ENCODE measurements at regions of chr3 and their contacts with region 1.

Region 1: GRCh38 chr3:3729261-3729660 is 70.0 kb upstream of the LRRN1 start:
- DNase-seq: no peak
- H3K4me3 ChIP-seq: no peak overlapping the region
- H3K27ac ChIP-seq: no peak overlapping the region
- H3K4me1 ChIP-seq: no peaks in the 10 kb centered on the region
- H3K27me3 ChIP-seq: no peaks in the 10 kb centered on the region
- CTCF ChIP-seq: no peak

Region 2: DNA sequence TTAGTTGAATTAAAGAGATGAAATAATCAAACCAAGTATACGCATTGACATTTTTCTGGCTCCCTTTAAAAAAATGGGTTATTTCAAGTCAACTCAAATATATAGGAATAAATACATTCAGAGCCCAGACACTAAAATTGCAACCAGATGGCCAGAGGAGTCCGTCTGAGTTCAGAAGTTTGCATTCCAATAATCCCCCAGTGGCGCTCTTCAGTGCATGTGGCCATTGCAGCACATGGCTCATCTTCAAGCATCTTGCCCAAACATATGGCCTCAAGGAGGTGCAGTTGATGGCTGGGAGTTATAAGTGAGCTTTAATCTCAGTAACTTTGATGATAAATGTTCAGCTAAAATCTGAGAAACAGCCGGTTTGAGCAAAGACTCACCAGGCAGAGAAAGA is 225.8 kb before region 1 on chr3:
- CTCF ChIA-PET with region 1: no interaction called
- POLR2A ChIA-PET with region 1: no interaction called
- intact Hi-C with region 1: no loop called
- DNase-seq: no peak
- H3K4me3 ChIP-seq: no peak overlapping the region
- H3K27ac ChIP-seq: no peak overlapping the region
- H3K4me1 ChIP-seq: no peaks in the 10 kb centered on the region
- H3K27me3 ChIP-seq: no peaks in the 10 kb centered on the region
- CTCF ChIP-seq: no peak

Region 3: DNA sequence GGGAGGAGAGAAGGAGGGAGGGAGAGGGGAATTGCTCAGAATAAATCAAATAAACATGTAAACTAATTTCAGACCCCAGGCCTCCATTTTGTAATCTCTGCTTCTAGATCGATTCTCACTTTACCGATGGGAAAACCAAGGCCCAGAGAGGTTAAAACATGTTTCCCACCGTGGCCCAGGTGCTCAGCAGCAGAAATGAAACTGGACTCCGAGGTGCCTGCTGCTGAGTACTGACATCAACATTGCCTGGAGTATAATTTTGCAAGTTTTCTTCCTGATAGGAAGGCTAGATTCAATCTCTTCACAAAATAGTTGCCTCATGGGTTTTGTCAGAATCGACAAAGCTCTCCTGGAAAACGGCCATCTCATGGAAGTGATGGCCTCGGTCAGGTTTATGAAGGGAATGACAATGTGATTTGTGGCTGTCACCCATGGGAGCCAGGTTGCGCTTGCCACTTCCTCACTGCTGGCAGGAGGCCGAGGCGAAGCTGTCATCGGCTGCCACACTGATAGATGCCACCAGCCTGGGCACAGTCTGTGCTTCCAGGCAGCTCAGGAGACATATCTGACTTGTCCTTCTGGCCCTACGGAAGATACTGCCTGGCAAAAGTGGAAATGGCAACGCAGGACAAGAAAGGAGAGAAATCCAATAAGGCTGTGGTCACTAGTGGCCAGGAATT is 63.2 kb before region 1 on chr3:
- CTCF ChIA-PET with region 1: no interaction called
- POLR2A ChIA-PET with region 1: no interaction called
- intact Hi-C with region 1: no loop called
- DNase-seq: no peak
- H3K4me3 ChIP-seq: no peak overlapping the region
- H3K27ac ChIP-seq: no peak overlapping the region
- H3K4me1 ChIP-seq: no peaks in the 10 kb centered on the region
- H3K27me3 ChIP-seq: no peaks in the 10 kb centered on the region
- CTCF ChIP-seq: no peak

Region 4: GRCh38 chr3:3683261-3683660 is 46.0 kb before region 1 on chr3:
- CTCF ChIA-PET with region 1: no interaction called
- POLR2A ChIA-PET with region 1: no interaction called
- intact Hi-C with region 1: no loop called
- DNase-seq: no peak
- H3K4me3 ChIP-seq: no peak overlapping the region
- H3K27ac ChIP-seq: no peak overlapping the region
- H3K4me1 ChIP-seq: no peaks in the 10 kb centered on the region
- H3K27me3 ChIP-seq: no peaks in the 10 kb centered on the region
- CTCF ChIP-seq: no peak

Region 5: DNA sequence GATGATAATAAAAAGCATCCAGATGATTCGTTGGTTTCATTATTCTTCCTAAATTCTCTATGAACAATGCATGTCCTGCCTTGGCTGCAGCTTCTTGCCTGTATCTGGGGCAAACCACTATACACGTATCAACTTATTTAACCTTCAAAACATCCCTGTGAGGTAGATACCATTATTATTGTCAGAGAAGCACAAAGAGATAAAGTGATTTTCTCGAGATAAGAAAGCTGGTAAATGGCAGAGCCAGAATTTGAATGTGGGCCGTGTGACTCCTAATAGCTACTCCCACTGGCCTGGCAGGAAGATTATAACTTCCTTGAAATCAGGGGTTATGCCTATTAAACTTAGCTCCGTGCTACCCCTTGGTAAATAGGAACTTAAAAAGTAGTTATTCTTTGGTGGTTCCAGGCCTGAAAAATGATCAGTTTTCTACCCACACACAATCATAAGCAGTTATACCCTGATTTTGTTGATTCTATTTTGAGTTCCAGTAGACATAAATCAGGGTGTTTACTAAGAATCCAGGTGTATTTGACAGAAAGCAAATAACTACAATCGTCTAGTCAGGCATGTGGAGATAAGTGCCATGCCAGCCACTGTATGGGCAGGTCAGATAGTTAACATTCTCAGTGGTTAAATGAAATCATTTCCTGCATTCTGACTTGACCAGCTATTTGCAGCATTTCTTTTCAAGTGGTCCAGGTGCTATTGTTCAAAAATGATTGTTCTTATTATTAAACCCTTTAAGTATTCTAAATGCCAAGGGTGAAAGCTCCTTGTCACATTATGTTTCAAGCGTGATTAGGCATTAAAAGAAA is 29.2 kb before region 1 on chr3:
- CTCF ChIA-PET with region 1: no interaction called
- POLR2A ChIA-PET with region 1: interaction called, 10 read pairs
- intact Hi-C with region 1: no loop called
- DNase-seq: peak in 1 of 2 experiments; percentile 35
- H3K4me3 ChIP-seq: no peak overlapping the region
- H3K27ac ChIP-seq: no peak overlapping the region
- H3K4me1 ChIP-seq: no peaks in the 10 kb centered on the region
- H3K27me3 ChIP-seq: no peaks in the 10 kb centered on the region
- CTCF ChIP-seq: no peak

Region 6: DNA sequence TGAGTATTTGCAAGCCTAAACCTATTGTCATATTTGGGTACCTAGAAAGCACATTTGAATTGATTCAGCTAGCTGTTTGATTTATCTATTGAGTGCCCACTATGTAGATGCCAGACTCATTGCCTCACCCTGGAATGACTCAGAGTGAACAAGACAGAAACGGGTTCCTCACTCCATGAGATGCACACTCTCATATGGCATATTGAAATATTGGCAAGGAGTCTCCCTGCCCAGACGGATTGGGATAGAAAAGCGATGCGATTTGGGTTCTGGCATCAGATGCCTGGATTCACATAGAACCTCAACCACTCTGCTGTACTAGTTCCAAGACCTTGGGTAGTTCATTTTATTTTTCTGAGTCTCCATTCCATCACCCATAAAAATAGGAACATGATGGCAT is 92.5 kb after region 1 on chr3:
- CTCF ChIA-PET with region 1: no interaction called
- POLR2A ChIA-PET with region 1: no interaction called
- intact Hi-C with region 1: no loop called
- DNase-seq: no peak
- H3K4me3 ChIP-seq: no peak overlapping the region
- H3K27ac ChIP-seq: no peak overlapping the region
- H3K4me1 ChIP-seq: no peaks in the 10 kb centered on the region
- H3K27me3 ChIP-seq: no peaks in the 10 kb centered on the region
- CTCF ChIP-seq: no peak

Measured in PC-9 (cell line).